ENCODE measurements at regions of chr9 and their contacts with region 1.

Region 1: DNA sequence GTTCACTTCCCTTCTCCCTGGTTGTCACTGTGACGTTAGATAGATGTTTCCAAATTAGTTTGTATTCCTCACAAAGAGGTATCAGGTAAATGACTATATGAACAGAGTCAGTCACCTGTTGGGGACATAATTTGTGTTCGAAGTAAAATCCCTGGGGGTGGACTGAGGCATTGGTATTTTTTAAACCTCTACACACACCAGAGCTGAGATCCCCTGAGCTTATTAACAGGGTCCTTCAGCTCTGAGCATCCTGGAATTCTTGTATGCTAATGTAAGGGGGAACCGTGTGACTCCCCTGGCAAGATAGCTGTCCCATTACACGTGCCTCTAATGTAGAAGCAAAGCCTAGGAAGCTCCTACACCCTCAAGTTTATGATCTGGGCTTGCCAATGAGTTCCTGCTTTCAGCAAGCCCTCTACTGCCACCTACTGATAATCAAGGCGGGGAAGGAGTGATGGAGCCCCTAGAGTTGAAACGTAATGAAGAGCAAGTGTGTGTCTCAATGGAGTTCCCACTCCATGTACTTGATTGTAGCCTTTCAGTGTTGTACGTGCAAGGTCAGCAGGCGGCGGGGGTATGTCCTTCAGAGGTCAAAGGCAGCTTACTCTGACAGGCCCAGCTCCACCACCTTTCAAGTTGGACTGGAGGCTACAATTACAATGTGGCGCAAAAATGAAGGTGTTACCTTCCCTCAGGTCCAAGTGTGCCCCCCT is 14.4 kb downstream of the PRKACG start:
- DNase-seq: peak; percentile 82 to 87 (median 87)
- H3K4me3 ChIP-seq: no peak overlapping the region
- H3K27ac ChIP-seq: no peak overlapping the region
- H3K4me1 ChIP-seq: peaks cover 20 to 47% (median 33%) of the 10 kb centered on the region in 4 experiments
- H3K27me3 ChIP-seq: no peaks in the 10 kb centered on the region

Region 2: DNA sequence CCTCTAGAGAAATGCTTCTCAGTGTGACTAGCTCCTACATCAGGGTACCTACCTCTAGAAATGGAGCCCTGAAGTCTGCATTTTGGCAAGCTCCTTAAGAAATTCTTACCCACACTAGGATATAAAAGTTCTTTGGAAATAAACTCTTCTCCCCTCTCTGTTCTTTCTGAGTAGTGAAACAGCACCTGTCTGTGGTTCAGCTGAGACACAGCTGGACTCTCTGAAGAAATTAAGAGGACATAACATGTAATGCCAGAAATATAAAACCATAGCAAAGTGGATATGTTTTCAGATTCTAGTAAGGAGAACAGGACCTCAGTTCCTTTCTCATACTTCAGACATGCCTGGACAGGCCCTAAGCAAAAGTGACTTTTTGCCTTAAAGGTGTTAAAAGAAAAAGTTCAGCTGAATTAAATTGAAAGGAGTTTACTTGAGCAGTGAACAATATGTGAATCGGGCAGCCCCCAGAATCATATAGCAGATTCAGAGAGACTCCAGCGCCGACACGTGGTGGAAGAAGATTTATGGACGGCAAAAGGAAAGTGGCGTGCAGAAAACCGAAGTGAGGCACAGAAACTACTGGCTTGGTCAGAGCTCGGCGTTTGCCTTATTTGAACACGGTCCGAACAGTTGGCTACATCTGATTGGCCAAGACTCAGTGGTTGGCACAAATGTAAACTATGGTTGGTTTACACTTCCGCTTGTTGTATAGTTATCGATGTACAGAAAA is 50.1 kb before region 1 on chr9:
- CTCF ChIA-PET with region 1: interaction called, 13 read pairs
- POLR2A ChIA-PET with region 1: no interaction called
- DNase-seq: peak; percentile 38 to 63 (median 62)
- H3K4me3 ChIP-seq: no peak overlapping the region
- H3K27ac ChIP-seq: no peak overlapping the region
- H3K4me1 ChIP-seq: peaks cover 3 to 24% (median 7%) of the 10 kb centered on the region in 4 experiments
- H3K27me3 ChIP-seq: no peaks in the 10 kb centered on the region

Region 3: DNA sequence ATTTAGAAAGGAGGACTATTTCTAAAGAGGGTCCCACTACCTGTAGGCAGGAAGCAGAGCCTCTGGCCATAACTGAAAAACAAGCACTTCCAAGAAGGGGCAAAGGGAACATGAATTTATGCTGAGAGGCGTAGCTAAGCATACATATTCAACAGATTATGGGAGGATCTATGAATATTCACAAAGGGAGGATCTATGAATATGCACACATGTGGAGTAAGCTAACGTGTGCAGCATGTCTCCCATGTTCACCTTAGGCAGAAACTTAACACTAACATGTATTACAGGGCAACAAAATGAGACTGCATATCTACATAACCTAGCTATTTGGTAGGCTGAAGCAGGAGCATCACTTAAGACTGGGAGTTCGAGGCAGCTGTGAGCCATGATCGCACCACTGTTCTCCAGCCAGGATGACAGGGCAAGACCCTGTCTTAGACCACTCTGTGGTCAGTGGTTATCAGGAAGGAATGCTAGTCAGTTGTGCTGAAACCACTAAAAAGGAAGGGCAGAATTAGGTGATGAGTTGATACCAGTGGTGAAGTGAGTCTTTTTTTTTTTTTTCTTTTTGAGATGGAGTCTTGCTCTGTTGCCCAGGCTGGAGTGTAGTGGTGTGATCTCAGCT is 56.8 kb after region 1 on chr9:
- CTCF ChIA-PET with region 1: no interaction called
- POLR2A ChIA-PET with region 1: no interaction called
- DNase-seq: peak in 2 of 3 donors; percentile 30 to 46
- H3K4me3 ChIP-seq: no peak overlapping the region
- H3K27ac ChIP-seq: no peak overlapping the region
- H3K4me1 ChIP-seq: peaks cover 0 to 12% (median 5%) of the 10 kb centered on the region in 4 experiments
- H3K27me3 ChIP-seq: no peaks in the 10 kb centered on the region

Region 4: DNA sequence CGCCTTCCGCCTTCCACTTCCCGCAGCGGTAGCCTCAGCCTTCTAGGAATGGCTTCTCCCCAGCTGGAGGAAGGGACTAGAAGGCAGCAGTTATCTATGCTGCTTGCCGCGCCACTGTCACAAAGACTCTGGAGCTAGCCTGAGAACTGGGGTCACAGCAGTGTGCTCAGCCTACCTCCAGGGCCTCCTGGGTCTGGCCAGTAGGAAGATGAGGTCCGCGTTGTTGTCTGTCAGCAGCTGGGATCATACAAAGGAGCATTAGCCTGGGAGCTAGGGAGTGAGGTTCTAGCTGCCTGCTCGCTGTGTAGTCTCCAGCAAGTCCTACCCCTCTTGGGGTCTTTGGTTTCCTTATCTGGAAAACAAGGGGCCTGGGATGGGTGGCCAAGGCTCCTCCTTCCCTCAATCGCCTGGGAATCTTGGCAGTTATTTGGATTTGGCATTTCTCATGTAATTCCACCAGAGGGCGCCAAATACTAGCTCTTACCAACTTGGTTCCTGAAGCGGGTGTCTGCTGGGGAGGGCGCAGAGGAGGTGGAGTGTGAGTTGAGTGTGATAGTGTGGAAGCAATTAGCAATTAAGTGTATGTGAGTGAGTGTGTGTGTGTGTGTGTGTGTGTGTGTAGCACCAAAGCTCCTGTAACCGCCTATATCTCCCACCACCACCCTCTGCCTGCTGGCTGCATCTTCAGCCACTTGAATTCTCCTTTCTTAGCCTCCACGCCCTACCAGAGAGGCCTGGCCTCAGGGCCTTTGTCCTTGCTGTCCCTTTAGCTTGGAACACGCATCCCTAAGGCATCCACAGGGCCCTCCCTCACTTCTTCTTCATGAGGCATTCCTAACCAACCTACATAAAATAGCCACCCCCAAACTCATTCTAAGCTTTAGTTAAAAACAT is 422.6 kb after region 1 on chr9:
- CTCF ChIA-PET with region 1: no interaction called
- POLR2A ChIA-PET with region 1: no interaction called
- DNase-seq: peak; percentile 52 to 77 (median 69)
- H3K4me3 ChIP-seq: no peak overlapping the region
- H3K27ac ChIP-seq: no peak overlapping the region
- H3K4me1 ChIP-seq: no peaks in the 10 kb centered on the region
- H3K27me3 ChIP-seq: peaks cover 0 to 2% (median 0%) of the 10 kb centered on the region in 5 experiments

Measured in common myeloid progenitor, CD34-positive (primary cell).